Activated CD4-positive, alpha-beta memory T cell treated with anti-CD3 and anti-CD28 coated beads, Interleukin-2, amount 10 ng/mL, durations not matched to agents 7 days and 5 days (primary cell): ENCODE measurements at regions of chr15 and their contacts with region 1.

Region 1: GRCh38 chr15:77907824-77908751 is 169.4 kb downstream of the TBC1D2B start:
- DNase-seq: peak; percentile 75
- H3K4me3 Mint-ChIP-seq: no peak overlapping the region
- H3K27ac Mint-ChIP-seq: no peak overlapping the region
- H3K4me1 Mint-ChIP-seq: peaks cover 7% of the 10 kb centered on the region
- H3K27me3 Mint-ChIP-seq: peaks cover 12% of the 10 kb centered on the region

Region 2: GRCh38 chr15:77720655-77721054 is 187.4 kb before region 1 on chr15:
- CTCF ChIA-PET with region 1: no interaction called
- POLR2A ChIA-PET with region 1: no interaction called
- DNase-seq: no peak
- H3K4me3 Mint-ChIP-seq: no peak overlapping the region
- H3K27ac Mint-ChIP-seq: no peak overlapping the region
- H3K4me1 Mint-ChIP-seq: no peaks in the 10 kb centered on the region
- H3K27me3 Mint-ChIP-seq: peaks cover 3% of the 10 kb centered on the region

Region 3: GRCh38 chr15:77959432-77959879 is 51.4 kb after region 1 on chr15:
- CTCF ChIA-PET with region 1: interaction called, 14 read pairs
- POLR2A ChIA-PET with region 1: no interaction called
- DNase-seq: peak; percentile 82
- H3K4me3 Mint-ChIP-seq: peak overlapping the region; percentile 60
- H3K27ac Mint-ChIP-seq: no peak overlapping the region
- H3K4me1 Mint-ChIP-seq: peaks cover 32% of the 10 kb centered on the region
- H3K27me3 Mint-ChIP-seq: peaks cover 34% of the 10 kb centered on the region